Posterior cingulate gyrus (tissue), 11 donors: ENCODE measurements at regions of chr9 and their contacts with region 1.

Region 1: DNA sequence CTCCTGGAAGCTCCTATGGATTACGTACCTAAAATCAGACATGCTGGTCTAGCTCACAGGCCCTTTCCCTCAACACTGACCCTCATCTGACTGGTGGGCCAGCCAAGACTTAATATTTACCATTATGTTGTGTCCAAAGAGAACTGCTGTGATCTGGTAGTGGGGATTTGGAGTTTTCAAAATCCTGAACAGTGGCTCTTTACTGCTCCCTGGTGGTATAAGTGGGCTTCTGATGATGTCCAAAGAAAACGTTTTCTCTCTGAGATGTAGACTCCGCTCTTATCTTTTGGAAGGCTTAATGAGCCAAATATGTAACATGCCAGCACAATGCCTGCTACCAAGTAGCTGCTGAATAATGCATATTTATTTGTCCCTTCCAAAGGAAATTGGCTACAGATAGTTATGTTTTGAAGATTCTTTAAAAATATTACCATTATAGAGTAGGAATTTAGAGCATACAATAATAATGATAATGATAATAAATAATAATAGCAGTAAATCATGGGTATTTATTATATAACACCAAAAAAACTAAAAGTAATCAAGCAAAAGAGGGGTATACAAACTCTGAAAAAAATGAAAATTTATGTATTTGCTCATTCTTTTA is 406.6 kb upstream of the TNC start:
- DNase-seq: peak in 1 of 10 donors; percentile 23

Region 2: DNA sequence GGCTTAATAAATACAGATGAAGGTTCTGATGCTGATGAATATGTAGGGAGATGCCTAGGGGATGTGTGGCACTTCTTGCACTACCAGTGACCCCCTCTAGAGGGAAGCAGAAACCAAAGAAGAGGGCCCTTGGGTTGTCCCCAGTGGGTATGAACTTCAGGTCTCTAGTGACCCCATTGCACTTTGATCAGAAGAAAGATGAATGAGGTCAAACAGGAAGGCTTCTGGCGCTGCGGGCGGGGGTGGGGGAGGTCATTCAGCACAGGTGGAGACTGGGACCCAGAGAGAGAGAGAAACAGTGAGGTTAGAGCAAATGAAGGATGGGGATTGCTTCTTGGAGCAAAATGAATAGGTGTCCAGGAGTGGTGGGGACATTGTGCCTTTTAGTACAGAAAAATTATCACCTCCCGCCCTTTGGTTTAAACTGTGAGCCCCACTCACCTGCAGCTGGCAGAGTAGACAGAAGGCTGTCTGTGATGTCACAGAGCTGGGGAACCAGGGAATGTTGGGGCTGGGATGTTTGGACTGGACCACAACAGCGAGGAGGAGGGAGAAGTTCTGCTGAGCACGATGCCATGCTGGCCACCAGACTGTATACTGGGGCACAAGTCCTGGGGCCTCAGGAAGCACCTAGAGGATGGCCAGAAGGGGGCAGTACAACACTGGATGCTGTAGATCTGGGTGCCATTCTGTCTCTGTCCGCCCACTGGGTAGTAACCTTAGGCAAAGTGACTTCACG is 842.8 kb before region 1 on chr9 and contains the start of gene TEX48:
- intact Hi-C with region 1: loop called (anchors 10 kb)
- DNase-seq: peak in 6 of 10 donors; percentile 33 to 91 (median 52)

Region 3: DNA sequence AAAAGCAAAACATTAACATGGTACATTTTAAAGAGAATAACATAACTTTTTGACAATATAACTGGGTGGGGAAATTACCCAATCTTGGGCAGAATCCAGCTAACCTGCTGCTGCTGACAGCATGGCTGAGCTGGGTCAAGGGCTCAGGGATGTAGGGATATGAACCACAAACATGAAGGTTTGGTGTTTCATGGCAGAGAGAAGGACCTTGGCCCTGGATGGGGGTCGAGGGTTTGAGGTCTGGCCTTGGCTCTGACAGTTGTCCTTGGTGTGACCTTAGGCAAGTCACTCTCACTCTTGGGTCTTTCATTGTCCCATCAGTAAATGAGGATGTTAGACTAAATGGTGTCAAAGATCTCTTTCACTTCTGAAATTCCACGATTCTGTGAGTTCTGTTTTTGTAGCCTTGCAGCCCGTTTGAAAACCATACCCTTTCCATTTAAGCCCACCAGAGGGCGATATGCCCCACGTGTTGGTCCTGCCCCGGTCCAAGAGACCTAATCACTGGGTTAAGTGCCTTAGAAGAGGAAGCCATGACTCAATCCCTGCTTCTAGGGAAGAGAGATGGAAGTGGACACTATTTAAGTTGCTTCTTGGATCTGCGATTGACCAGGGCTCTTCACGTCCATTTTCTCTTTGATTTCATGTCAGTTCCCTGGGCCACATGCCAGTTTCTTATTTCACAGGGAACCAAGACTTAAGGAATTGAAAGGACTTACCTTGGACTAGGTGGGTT is 785.8 kb before region 1 on chr9:
- intact Hi-C with region 1: loop called (anchors 10 kb)
- DNase-seq: peak in 7 of 10 donors; percentile 26 to 90 (median 61)

Region 4: DNA sequence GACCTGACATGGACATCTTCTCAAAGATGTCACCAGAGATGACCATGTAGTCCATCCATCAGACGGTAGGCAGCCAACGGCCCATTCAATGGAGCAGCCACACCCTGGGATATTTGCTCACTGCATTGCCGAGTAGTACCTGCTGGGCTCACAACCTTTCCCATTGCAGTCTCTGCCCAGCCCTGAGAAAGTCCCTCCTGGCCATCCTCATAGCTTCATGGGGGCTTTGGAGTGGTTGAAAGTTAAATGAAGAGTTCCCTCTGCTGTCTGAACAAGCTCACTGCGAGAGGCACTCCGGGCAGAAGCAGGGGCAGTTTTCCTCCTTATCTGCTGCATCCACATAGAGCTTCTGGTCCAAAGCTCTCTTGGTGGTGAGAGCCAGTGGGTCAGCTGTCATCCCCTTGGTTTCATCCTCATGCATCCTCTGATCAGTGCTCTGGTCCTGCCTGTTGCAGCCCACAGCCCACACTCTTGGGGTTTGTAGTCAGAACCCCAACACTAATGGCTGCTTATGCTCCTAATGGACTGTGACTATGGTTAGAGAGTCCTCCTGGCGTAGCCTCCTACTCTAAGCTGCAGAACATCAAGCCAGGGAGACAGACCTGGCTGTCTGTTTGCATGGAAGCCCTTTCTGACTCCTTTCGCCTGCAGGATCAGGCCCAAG is 617.5 kb before region 1 on chr9:
- intact Hi-C with region 1: loop called (anchors 10 kb)
- DNase-seq: no peak

Region 5: DNA sequence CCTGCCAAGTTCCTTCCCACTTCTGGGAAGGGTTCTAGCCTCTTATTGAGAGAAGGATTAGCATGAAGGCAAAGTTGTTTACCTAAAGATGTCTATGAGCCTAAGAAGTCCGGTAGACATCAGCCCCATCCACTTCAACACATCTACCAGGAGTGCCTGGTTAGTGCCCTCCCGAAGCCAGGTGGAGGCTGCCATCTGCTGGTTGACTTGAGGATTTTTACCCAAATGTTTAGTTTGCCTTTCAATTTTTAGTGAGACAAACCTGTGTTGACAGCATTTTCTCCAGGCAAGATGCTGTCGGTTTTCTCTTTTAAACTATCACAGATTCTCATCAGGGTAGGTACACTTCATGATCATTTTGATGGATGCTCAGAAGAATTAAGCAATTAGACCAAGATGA is 510.6 kb before region 1 on chr9:
- intact Hi-C with region 1: loop called (anchors 10 kb)
- DNase-seq: peak; percentile 44 to 94 (median 74)

Region 6: GRCh38 chr9:115109486-115109885 is 415.1 kb before region 1 on chr9:
- intact Hi-C with region 1: loop called (anchors 10 kb)
- DNase-seq: no peak

Region 7: DNA sequence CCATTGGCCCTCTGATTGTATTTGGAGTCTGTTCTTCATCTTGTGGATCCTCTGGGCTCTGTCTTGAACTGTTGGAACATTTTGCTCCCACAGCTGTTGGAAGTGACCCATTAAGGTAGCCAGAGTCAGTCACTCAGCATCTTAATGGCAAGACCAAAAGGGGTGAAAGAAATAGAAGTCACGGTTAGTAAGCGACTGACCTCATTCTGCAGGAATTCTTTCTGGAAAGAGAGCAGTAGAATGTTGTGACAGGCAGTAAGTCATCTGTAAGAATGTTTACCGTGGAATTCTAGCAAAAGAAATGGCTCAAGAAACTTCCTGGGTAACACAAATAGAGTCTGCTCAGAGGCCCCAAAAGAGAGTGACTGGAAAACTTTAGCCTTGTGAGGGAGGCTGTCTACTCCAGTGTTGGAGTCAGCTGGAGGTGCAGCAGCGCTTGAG is 378.0 kb before region 1 on chr9:
- intact Hi-C with region 1: loop called (anchors 10 kb)
- DNase-seq: no peak

Region 8: GRCh38 chr9:115575147-115575546 is 50.6 kb after region 1 on chr9:
- intact Hi-C with region 1: no loop called
- DNase-seq: no peak

Region 9: DNA sequence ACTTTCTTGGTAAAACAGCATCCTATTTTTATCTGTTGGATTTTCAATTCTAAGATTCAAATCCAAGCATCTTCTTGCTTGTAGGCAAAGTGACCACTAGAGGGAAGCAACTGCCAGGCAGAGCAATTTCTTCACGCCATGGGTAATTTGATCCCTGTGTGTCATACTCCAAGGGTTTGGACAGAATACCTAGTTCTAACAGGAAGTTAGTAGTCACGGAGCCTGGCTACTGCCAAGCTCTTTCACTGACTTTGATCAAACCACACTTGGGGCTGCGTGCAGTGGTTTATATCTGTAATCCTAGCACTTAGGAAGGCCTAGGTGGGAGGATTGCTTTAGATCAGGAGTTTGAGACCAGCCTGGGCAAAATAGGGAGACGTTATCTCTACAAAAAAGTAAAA is 67.0 kb after region 1 on chr9:
- intact Hi-C with region 1: no loop called
- DNase-seq: peak in 5 of 10 donors; percentile 12 to 81 (median 49)

Region 10: GRCh38 chr9:115604831-115605483 is 80.4 kb after region 1 on chr9:
- intact Hi-C with region 1: no loop called
- DNase-seq: no peak

Region 11: GRCh38 chr9:115615821-115616665 is 91.5 kb after region 1 on chr9:
- intact Hi-C with region 1: no loop called
- DNase-seq: no peak